PC-3 (cell line): ENCODE measurements at regions of chr17 and their contacts with region 1.

Region 1: GRCh38 chr17:66002812-66003211 is 189.1 kb downstream of the CEP112 start:
- DNase-seq: no peak
- ATAC-seq: no peak
- H3K4me3 ChIP-seq: no peak overlapping the region
- H3K27ac ChIP-seq: no peak overlapping the region
- H3K4me1 ChIP-seq: no peaks in the 10 kb centered on the region
- H3K27me3 ChIP-seq: no peaks in the 10 kb centered on the region
- CTCF ChIP-seq: no peak

Region 2: GRCh38 chr17:65604070-65604469 is 398.7 kb before region 1 on chr17:
- CTCF ChIA-PET with region 1: no interaction called
- POLR2A ChIA-PET with region 1: interaction called, 28 read pairs
- intact Hi-C with region 1: no loop called
- DNase-seq: peak; percentile 68
- ATAC-seq: peak; percentile 93
- H3K4me3 ChIP-seq: no peak overlapping the region
- H3K27ac ChIP-seq: no peak overlapping the region
- H3K4me1 ChIP-seq: peaks cover 11% of the 10 kb centered on the region
- H3K27me3 ChIP-seq: no peaks in the 10 kb centered on the region
- CTCF ChIP-seq: no peak

Region 3: DNA sequence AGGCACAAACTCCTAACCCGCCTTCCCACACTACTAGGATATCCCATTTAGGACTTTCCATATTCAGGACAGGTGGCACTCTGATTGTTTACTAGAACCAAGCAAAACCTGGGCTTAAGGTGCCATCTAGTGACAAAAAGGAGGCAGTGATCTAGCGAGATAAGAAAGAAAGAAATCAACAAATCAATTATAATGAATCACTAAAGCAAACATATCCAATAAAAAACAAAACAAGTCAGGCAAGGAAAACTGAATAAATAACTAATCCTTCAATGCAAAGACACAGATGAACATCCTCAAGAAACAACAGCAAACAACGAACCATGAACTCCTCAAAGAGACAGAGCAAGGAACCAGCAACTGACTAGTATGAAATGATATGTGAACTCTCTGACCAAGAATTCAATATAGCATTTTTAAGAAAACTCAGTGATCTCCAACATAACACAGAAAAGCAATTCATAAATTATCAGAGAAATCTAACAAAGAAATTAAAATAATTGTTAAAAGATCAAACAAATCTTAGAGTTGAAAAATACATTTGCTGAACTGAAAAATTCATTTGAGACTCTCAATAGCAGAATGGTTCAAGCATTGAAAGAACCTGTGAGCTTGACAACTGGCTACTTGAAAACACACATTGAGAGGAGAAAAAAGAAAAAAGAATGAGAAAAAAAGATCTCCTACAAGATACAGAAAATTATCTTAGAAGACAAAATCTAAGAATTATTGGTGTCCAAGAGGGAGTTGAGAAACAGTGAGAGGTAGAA is 14.5 kb before region 1 on chr17:
- CTCF ChIA-PET with region 1: no interaction called
- POLR2A ChIA-PET with region 1: no interaction called
- intact Hi-C with region 1: no loop called
- DNase-seq: peak; percentile 90
- ATAC-seq: peak; percentile 94
- H3K4me3 ChIP-seq: no peak overlapping the region
- H3K27ac ChIP-seq: no peak overlapping the region
- H3K4me1 ChIP-seq: 0 out of 2 replicates have a peak, but pooled peaks cover 4% of the 10 kb centered on the region
- H3K27me3 ChIP-seq: no peaks in the 10 kb centered on the region
- CTCF ChIP-seq: peak; percentile 98

Region 4: GRCh38 chr17:66076546-66077125 is 73.8 kb after region 1 on chr17:
- CTCF ChIA-PET with region 1: no interaction called
- POLR2A ChIA-PET with region 1: no interaction called
- intact Hi-C with region 1: no loop called
- DNase-seq: no peak
- ATAC-seq: no peak
- H3K4me3 ChIP-seq: no peak overlapping the region
- H3K27ac ChIP-seq: no peak overlapping the region
- H3K4me1 ChIP-seq: no peaks in the 10 kb centered on the region
- H3K27me3 ChIP-seq: no peaks in the 10 kb centered on the region
- CTCF ChIP-seq: no peak

Region 5: GRCh38 chr17:66123163-66123562 is 120.4 kb after region 1 on chr17:
- CTCF ChIA-PET with region 1: no interaction called
- POLR2A ChIA-PET with region 1: interaction called, 15 read pairs
- intact Hi-C with region 1: no loop called
- DNase-seq: peak; percentile 52
- ATAC-seq: no peak
- H3K4me3 ChIP-seq: no peak overlapping the region
- H3K27ac ChIP-seq: no peak overlapping the region
- H3K4me1 ChIP-seq: no peaks in the 10 kb centered on the region
- H3K27me3 ChIP-seq: no peaks in the 10 kb centered on the region
- CTCF ChIP-seq: no peak